ENCODE measurements at regions of chr9 and their contacts with region 1.

Region 1: GRCh38 chr9:127214421-127215267 is 49.9 kb upstream of the GARNL3 start:
- DNase-seq: peak; percentile 77
- ATAC-seq: peak; percentile 47
- H3K4me3 Mint-ChIP-seq: no peak overlapping the region
- H3K27ac Mint-ChIP-seq: no peak overlapping the region
- H3K4me1 Mint-ChIP-seq: peaks cover 24% of the 10 kb centered on the region
- H3K27me3 Mint-ChIP-seq: no peaks in the 10 kb centered on the region
- CTCF ChIP-seq: peak; percentile 64

Region 2: DNA sequence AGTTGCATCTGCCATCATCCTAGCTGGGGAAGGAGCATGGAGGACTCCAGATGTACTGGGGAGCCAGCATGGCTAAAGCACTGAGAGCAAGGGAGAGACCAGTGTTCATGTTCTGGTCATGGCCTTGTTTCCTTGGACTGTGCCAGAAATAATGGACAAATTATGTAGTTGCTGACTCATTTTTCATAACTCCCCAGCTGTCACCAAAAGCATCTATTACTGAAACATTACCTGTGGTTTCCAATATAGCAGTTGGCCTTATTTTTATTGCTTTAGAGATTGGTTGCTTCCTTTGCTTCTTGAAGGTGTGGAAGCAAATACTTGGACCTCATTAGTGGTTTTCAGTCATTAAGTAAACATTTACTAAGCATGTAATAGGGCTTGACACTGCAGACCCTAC is 288.8 kb before region 1 on chr9:
- CTCF ChIA-PET with region 1: no interaction called
- POLR2A ChIA-PET with region 1: no interaction called
- DNase-seq: no peak
- ATAC-seq: no peak
- H3K4me3 Mint-ChIP-seq: no peak overlapping the region
- H3K27ac Mint-ChIP-seq: no peak overlapping the region
- H3K4me1 Mint-ChIP-seq: no peaks in the 10 kb centered on the region
- H3K27me3 Mint-ChIP-seq: no peaks in the 10 kb centered on the region; the same call in 1 of the 2 replicates
- CTCF ChIP-seq: no peak

Region 3: GRCh38 chr9:126939821-126940221 is 274.8 kb before region 1 on chr9:
- CTCF ChIA-PET with region 1: interaction called, 20 read pairs
- POLR2A ChIA-PET with region 1: no interaction called
- DNase-seq: no peak
- ATAC-seq: no peak
- H3K4me3 Mint-ChIP-seq: no peak overlapping the region
- H3K27ac Mint-ChIP-seq: no peak overlapping the region
- H3K4me1 Mint-ChIP-seq: peaks cover 16% of the 10 kb centered on the region
- H3K27me3 Mint-ChIP-seq: no peaks in the 10 kb centered on the region
- CTCF ChIP-seq: no peak

Region 4: DNA sequence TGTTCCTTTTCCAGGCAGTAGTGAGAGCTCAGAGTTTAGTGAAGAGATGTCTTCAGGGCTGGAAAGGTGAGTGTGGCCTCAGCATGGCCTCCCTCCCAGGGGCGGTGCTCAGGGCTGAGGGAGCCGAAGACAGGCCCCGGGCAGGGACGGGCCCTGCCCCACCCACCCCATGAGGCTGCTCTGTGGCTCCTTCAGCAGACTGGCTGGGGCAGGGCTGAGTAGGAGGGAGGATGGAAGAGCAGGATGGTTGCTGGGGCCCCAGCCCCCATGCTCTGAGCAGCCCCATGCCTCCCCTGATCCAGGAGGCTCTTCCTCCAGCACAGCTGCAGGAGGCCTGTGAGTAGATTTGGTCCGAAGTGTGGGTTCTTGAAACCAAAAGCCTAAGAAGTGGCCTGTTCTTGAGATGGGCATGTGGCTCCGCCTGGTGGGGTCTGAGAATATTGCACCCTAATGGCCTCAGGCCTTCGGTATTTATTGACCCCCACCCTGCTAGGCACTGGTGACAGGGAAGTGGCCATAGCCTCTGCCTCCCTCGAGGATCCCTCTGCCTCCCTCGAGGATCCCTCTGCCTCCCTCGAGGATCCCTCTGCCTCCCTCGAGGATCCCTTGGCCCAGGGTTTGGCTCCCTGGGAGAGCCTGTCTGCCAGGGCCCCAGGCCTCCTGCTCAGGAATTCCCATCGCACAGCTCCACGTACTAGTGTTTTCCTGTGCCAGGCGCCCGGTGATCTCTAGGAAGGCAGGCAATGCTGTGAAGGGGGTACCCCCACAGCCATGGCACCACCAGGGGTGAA is 15.4 kb before region 1 on chr9:
- CTCF ChIA-PET with region 1: interaction called, 63 read pairs
- POLR2A ChIA-PET with region 1: no interaction called
- DNase-seq: peak; percentile 92
- ATAC-seq: peak; percentile 86
- H3K4me3 Mint-ChIP-seq: no peak overlapping the region
- H3K27ac Mint-ChIP-seq: no peak overlapping the region
- H3K4me1 Mint-ChIP-seq: peaks cover 7% of the 10 kb centered on the region
- H3K27me3 Mint-ChIP-seq: no peaks in the 10 kb centered on the region
- CTCF ChIP-seq: peak; percentile 91

Region 5: DNA sequence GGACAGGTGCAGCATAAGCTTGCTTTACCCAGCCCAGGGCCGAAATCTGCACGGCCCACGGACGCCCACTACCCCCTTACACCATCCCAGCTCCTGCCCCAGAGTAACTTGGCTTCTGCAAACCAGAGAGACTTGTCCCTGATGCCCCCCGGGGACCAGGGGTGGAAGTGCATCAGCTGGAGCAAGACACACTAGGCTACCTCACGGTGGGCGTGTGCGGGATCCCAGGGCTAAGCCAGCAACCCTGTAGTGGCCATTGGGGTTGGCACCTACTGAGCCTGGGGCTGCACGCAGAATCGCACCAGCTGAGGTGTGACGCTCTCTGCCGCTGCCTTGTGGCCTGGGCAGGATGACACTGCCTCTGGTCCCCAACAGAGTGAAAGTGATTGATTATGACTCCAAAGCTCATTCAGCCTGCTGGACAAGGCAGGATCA is 203.4 kb after region 1 on chr9:
- CTCF ChIA-PET with region 1: interaction called, 11 read pairs
- POLR2A ChIA-PET with region 1: no interaction called
- DNase-seq: peak; percentile 82
- ATAC-seq: peak; percentile 95
- H3K4me3 Mint-ChIP-seq: no peak overlapping the region
- H3K27ac Mint-ChIP-seq: 0 out of 2 replicates have a peak overlapping the region, but pooled peaks have one; percentile 14
- H3K4me1 Mint-ChIP-seq: peaks cover 27% of the 10 kb centered on the region
- H3K27me3 Mint-ChIP-seq: peaks cover 3% of the 10 kb centered on the region; the same call in 1 of the 2 replicates
- CTCF ChIP-seq: no peak